ENCODE measurements at regions of chr19 and their contacts with region 1.

Region 1: GRCh38 chr19:18919086-18919899 is at the starts of genes COPE and DDX49:
- DNase-seq: peak; percentile 85 to 99 (median 99)
- ATAC-seq: peak; percentile 97
- H3K4me3 ChIP-seq: peak within 1 kb of the TSS; percentile 85
- H3K4me3 Mint-ChIP-seq: peak within 1 kb of the TSS; percentile 71 to 100 (median 92)
- H3K27ac ChIP-seq: peak within 1 kb of the TSS; percentile 93
- H3K27ac Mint-ChIP-seq: peak within 1 kb of the TSS; percentile 76 to 98 (median 96)
- H3K4me1 ChIP-seq: peaks cover 18 to 21% of the 10 kb centered on the region in 2 donors
- H3K4me1 Mint-ChIP-seq: peaks cover 25 to 63% (median 36%) of the 10 kb centered on the region in 7 donors
- H3K27me3 ChIP-seq: no peaks in the 10 kb centered on the region
- H3K27me3 Mint-ChIP-seq: peaks cover 0 to 2% (median 0%) of the 10 kb centered on the region in 5 donors
- total RNA-seq, gene COPE: 124 to 283 (median 163) TPM
- total RNA-seq, gene DDX49: 36.4 to 63.2 (median 50.2) TPM

Region 2: DNA sequence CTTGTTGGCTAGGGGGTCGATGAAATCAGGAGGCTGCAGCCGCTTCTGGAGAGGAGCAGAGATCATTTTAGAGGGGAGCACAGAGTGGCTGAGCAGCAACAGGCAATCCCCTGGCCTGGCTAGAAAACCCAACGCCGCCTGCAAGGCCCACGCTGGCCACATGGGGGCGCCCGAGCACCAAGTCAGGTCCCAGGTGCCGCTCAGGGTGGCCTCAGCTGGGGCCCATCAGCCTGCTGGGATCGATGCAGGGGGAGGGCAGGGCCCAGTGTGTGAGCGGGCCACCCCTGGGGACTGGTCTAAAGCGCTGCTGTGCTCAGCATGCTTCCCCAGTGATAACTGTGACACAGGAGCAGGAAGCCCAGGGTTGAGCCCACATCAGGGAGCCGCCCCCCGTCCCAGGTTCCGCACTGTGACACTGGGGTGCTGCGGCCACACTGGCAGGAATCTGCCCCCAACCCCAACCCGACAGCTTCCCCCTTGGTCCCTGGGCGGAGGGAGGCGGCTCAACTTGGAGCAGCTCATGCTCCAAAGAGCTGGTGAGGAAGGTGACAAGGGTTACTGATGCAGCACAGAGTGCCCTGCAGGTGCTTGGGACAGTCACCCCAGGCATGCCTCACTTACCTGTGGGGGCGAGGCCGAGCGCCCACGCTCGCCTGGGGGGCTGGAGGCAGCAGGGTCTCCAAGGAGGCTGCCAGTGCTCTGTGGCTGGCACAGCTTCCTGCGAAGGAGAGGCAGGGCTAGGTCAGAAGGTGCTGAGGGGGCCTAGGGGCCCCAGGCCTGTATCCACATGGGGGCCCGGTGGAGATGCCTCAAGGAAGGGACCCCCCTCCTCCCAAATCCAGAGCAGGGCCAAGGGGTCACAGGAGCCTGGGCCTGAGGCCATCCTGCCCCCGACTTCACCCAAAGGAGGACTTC is 468.1 kb before region 1 on chr19:
- CTCF ChIA-PET with region 1: no interaction called
- POLR2A ChIA-PET with region 1: no interaction called
- intact Hi-C with region 1: loop called in 1 of 2 experiments (anchors 1 kb)
- DNase-seq: peak; percentile 70 to 93 (median 83)
- ATAC-seq: peak; percentile 94
- H3K4me3 ChIP-seq: no peak overlapping the region
- H3K4me3 Mint-ChIP-seq: no peak overlapping the region
- H3K27ac ChIP-seq: no peak overlapping the region
- H3K27ac Mint-ChIP-seq: peak overlapping the region in 1 of 9 donors; percentile 76
- H3K4me1 ChIP-seq: no peaks in the 10 kb centered on the region
- H3K4me1 Mint-ChIP-seq: peaks cover 0 to 6% (median 4%) of the 10 kb centered on the region in 7 donors
- H3K27me3 ChIP-seq: no peaks in the 10 kb centered on the region
- H3K27me3 Mint-ChIP-seq: no peaks in the 10 kb centered on the region

Region 3: GRCh38 chr19:18571564-18572300 is 347.6 kb before region 1 on chr19 and contains the start of gene UBA52:
- CTCF ChIA-PET with region 1: no interaction called
- POLR2A ChIA-PET with region 1: interaction called, 15 read pairs
- intact Hi-C with region 1: loop called (anchors 1 kb)
- DNase-seq: peak; percentile 97 to 99 (median 98)
- ATAC-seq: peak; percentile 97
- H3K4me3 ChIP-seq: peak within 1 kb of the TSS; percentile 91
- H3K4me3 Mint-ChIP-seq: peak within 1 kb of the TSS; percentile 83 to 97 (median 91)
- H3K27ac ChIP-seq: peak within 1 kb of the TSS; percentile 94
- H3K27ac Mint-ChIP-seq: peak within 1 kb of the TSS; percentile 92 to 99 (median 96)
- H3K4me1 ChIP-seq: peaks cover 17% of the 10 kb centered on the region in 2 donors
- H3K4me1 Mint-ChIP-seq: peaks cover 14 to 38% (median 26%) of the 10 kb centered on the region in 7 donors
- H3K27me3 ChIP-seq: no peaks in the 10 kb centered on the region
- H3K27me3 Mint-ChIP-seq: peaks cover 0 to 2% (median 0%) of the 10 kb centered on the region in 5 donors
- total RNA-seq, gene UBA52: 1,563 to 2,429 (median 2,196) TPM

Region 4: GRCh38 chr19:18683213-18683939 is 235.9 kb before region 1 on chr19 and contains the start of gene CRTC1:
- CTCF ChIA-PET with region 1: no interaction called
- POLR2A ChIA-PET with region 1: no interaction called
- intact Hi-C with region 1: loop called in 1 of 2 experiments (anchors 5 kb)
- DNase-seq: peak; percentile 91 to 98 (median 96)
- ATAC-seq: peak; percentile 94
- H3K4me3 ChIP-seq: peak within 1 kb of the TSS; percentile 92
- H3K4me3 Mint-ChIP-seq: peak within 1 kb of the TSS; percentile 80 to 93 (median 87)
- H3K27ac ChIP-seq: peak within 1 kb of the TSS; percentile 78
- H3K27ac Mint-ChIP-seq: peak within 1 kb of the TSS; percentile 31 to 94 (median 90)
- H3K4me1 ChIP-seq: peaks cover 12 to 16% of the 10 kb centered on the region in 2 donors
- H3K4me1 Mint-ChIP-seq: peaks cover 6 to 45% (median 27%) of the 10 kb centered on the region in 7 donors
- H3K27me3 ChIP-seq: no peaks in the 10 kb centered on the region
- H3K27me3 Mint-ChIP-seq: peaks cover 0 to 3% (median 0%) of the 10 kb centered on the region in 5 donors
- total RNA-seq, gene CRTC1: 8.4 to 23.4 (median 22.3) TPM

Region 5: GRCh38 chr19:18840288-18841267 is 78.7 kb before region 1 on chr19:
- CTCF ChIA-PET with region 1: no interaction called
- POLR2A ChIA-PET with region 1: no interaction called
- intact Hi-C with region 1: no loop called
- DNase-seq: no peak
- ATAC-seq: no peak
- H3K4me3 ChIP-seq: no peak overlapping the region
- H3K4me3 Mint-ChIP-seq: peak overlapping the region in 7 of 10 donors; percentile 40 to 73 (median 50)
- H3K27ac ChIP-seq: no peak overlapping the region
- H3K27ac Mint-ChIP-seq: peak overlapping the region in 8 of 9 donors; percentile 21 to 92 (median 72)
- H3K4me1 ChIP-seq: peaks cover 61 to 65% of the 10 kb centered on the region in 2 donors
- H3K4me1 Mint-ChIP-seq: peaks cover 52 to 98% (median 85%) of the 10 kb centered on the region in 7 donors
- H3K27me3 ChIP-seq: no peaks in the 10 kb centered on the region
- H3K27me3 Mint-ChIP-seq: no peaks in the 10 kb centered on the region

Region 6: GRCh38 chr19:18906605-18907519 is 12.4 kb before region 1 on chr19:
- CTCF ChIA-PET with region 1: no interaction called
- POLR2A ChIA-PET with region 1: no interaction called
- intact Hi-C with region 1: no loop called
- DNase-seq: no peak
- ATAC-seq: no peak
- H3K4me3 ChIP-seq: no peak overlapping the region
- H3K4me3 Mint-ChIP-seq: no peak overlapping the region
- H3K27ac ChIP-seq: no peak overlapping the region
- H3K27ac Mint-ChIP-seq: no peak overlapping the region
- H3K4me1 ChIP-seq: no peaks in the 10 kb centered on the region
- H3K4me1 Mint-ChIP-seq: peaks cover 0 to 5% (median 0%) of the 10 kb centered on the region in 7 donors
- H3K27me3 ChIP-seq: no peaks in the 10 kb centered on the region
- H3K27me3 Mint-ChIP-seq: no peaks in the 10 kb centered on the region

Region 7: GRCh38 chr19:18932216-18932841 is 13.0 kb after region 1 on chr19:
- CTCF ChIA-PET with region 1: no interaction called
- POLR2A ChIA-PET with region 1: interaction called, 8 read pairs
- intact Hi-C with region 1: loop called in 1 of 2 experiments (anchors 1 kb)
- DNase-seq: peak; percentile 55 to 85 (median 72)
- ATAC-seq: peak; percentile 99
- H3K4me3 ChIP-seq: peak overlapping the region; percentile 55
- H3K4me3 Mint-ChIP-seq: peak overlapping the region; percentile 63 to 91 (median 80)
- H3K27ac ChIP-seq: peak overlapping the region; percentile 39
- H3K27ac Mint-ChIP-seq: peak overlapping the region in 4 of 9 donors; percentile 2 to 84 (median 16)
- H3K4me1 ChIP-seq: peaks cover 3 to 7% of the 10 kb centered on the region in 2 donors
- H3K4me1 Mint-ChIP-seq: peaks cover 0 to 15% (median 8%) of the 10 kb centered on the region in 7 donors
- H3K27me3 ChIP-seq: no peaks in the 10 kb centered on the region
- H3K27me3 Mint-ChIP-seq: peaks cover 0 to 15% (median 8%) of the 10 kb centered on the region in 5 donors

Region 8: GRCh38 chr19:19063183-19064097 is 144.1 kb after region 1 on chr19 and contains the start of gene SLC25A42:
- CTCF ChIA-PET with region 1: no interaction called
- POLR2A ChIA-PET with region 1: interaction called, 3 read pairs
- intact Hi-C with region 1: loop called in 1 of 2 experiments (anchors 1 kb)
- DNase-seq: peak; percentile 93 to 100 (median 99)
- ATAC-seq: peak; percentile 95
- H3K4me3 ChIP-seq: peak within 1 kb of the TSS; percentile 82
- H3K4me3 Mint-ChIP-seq: peak within 1 kb of the TSS; percentile 83 to 99 (median 92)
- H3K27ac ChIP-seq: peak within 1 kb of the TSS; percentile 83
- H3K27ac Mint-ChIP-seq: peak within 1 kb of the TSS; percentile 75 to 98 (median 83)
- H3K4me1 ChIP-seq: peaks cover 11 to 15% of the 10 kb centered on the region in 2 donors
- H3K4me1 Mint-ChIP-seq: peaks cover 5 to 41% (median 35%) of the 10 kb centered on the region in 7 donors
- H3K27me3 ChIP-seq: no peaks in the 10 kb centered on the region
- H3K27me3 Mint-ChIP-seq: no peaks in the 10 kb centered on the region
- total RNA-seq, gene SLC25A42: 19.0 to 36.1 (median 21.6) TPM

Region 9: DNA sequence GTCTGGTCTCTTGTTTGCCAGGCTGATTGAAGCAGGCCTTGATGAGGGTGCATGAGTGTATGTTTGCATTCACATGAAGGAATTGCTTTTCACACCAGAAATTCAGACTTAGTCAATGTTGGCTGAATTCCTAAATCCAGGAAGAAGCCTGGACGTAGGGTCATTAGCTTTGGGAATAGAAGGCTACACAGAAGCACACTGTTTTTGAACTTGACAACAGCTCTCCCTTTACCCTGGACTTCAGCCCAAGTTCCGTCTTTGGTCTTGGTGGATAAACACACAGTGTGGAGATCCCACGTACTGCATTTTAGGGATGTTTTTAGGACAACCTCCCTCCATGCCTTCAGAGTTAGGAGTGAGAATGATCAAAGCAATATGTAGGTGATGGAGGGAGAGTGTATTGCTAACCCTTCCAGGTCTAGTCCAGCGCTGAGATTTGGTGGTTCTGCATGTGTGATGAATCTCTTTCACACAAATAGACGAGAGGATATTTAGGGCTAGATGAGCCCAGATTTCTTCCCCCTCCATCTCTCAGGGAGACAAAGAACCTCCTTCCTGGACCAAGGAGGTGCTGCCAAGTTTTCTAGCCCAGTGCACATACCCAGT is 331.0 kb after region 1 on chr19:
- CTCF ChIA-PET with region 1: no interaction called
- POLR2A ChIA-PET with region 1: no interaction called
- intact Hi-C with region 1: no loop called
- DNase-seq: no peak
- ATAC-seq: no peak
- H3K4me3 ChIP-seq: no peak overlapping the region
- H3K4me3 Mint-ChIP-seq: no peak overlapping the region
- H3K27ac ChIP-seq: no peak overlapping the region
- H3K27ac Mint-ChIP-seq: no peak overlapping the region
- H3K4me1 ChIP-seq: no peaks in the 10 kb centered on the region
- H3K4me1 Mint-ChIP-seq: no peaks in the 10 kb centered on the region
- H3K27me3 ChIP-seq: no peaks in the 10 kb centered on the region
- H3K27me3 Mint-ChIP-seq: peaks cover 27 to 42% (median 33%) of the 10 kb centered on the region in 5 donors

Region 10: DNA sequence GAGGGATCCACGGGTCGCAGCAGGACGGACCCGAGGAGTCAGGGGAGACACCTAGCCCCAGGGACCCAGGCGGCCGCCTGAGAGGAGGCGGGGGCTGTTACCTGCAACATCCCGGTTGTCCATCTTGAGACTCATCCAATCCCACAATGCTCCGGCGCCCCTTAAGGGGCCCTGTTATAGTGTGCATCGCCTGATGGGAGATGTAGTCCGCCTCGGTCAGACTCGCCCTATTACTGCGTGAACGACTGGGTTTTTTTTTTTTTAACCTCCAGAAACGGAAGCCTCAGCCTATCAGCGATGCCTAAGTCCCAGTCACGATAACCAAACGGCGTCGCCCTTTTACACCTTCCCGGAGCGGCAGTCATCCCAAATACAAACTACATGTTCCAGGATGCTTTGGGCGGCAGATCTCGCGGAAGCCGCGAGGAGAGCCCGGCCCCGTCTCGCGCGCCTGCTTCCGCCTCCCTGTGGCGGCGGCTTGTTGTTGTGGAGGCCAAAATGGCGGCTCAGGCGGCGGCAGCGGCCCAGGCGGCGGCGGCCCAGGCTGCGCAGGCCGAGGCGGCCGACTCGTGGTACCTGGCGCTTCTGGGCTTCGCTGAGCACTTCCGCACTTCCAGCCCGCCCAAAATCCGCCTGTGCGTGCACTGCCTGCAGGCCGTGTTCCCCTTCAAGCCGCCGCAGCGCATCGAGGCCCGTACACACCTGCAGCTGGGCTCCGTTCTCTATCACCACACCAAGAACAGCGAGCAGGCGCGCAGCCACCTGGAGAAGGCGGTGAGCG is 401.3 kb after region 1 on chr19 and contains the starts of genes MAU2 and SUGP1:
- CTCF ChIA-PET with region 1: no interaction called
- POLR2A ChIA-PET with region 1: no interaction called
- intact Hi-C with region 1: loop called in 1 of 2 experiments (anchors 1 kb)
- DNase-seq: peak; percentile 78 to 94 (median 91)
- ATAC-seq: peak; percentile 94
- H3K4me3 ChIP-seq: peak within 1 kb of the TSS; percentile 89
- H3K4me3 Mint-ChIP-seq: peak within 1 kb of the TSS; percentile 93 to 100 (median 98)
- H3K27ac ChIP-seq: peak within 1 kb of the TSS; percentile 95
- H3K27ac Mint-ChIP-seq: peak within 1 kb of the TSS; percentile 96 to 100 (median 99)
- H3K4me1 ChIP-seq: peaks cover 23 to 30% of the 10 kb centered on the region in 2 donors
- H3K4me1 Mint-ChIP-seq: peaks cover 20 to 66% (median 44%) of the 10 kb centered on the region in 7 donors
- H3K27me3 ChIP-seq: no peaks in the 10 kb centered on the region
- H3K27me3 Mint-ChIP-seq: no peaks in the 10 kb centered on the region
- total RNA-seq, gene MAU2: 93.7 to 170 (median 136) TPM
- total RNA-seq, gene SUGP1: 59.7 to 96.6 (median 77.5) TPM